ENCODE measurements at regions of chr2 and their contacts with region 1.

Region 1: GRCh38 chr2:222561817-222562645 is 93.9 kb downstream of the FARSB start:
- DNase-seq: peak; percentile 62
- H3K4me3 Mint-ChIP-seq: no peak overlapping the region
- H3K27ac Mint-ChIP-seq: no peak overlapping the region
- H3K4me1 Mint-ChIP-seq: no peaks in the 10 kb centered on the region
- H3K27me3 Mint-ChIP-seq: no peaks in the 10 kb centered on the region

Region 2: DNA sequence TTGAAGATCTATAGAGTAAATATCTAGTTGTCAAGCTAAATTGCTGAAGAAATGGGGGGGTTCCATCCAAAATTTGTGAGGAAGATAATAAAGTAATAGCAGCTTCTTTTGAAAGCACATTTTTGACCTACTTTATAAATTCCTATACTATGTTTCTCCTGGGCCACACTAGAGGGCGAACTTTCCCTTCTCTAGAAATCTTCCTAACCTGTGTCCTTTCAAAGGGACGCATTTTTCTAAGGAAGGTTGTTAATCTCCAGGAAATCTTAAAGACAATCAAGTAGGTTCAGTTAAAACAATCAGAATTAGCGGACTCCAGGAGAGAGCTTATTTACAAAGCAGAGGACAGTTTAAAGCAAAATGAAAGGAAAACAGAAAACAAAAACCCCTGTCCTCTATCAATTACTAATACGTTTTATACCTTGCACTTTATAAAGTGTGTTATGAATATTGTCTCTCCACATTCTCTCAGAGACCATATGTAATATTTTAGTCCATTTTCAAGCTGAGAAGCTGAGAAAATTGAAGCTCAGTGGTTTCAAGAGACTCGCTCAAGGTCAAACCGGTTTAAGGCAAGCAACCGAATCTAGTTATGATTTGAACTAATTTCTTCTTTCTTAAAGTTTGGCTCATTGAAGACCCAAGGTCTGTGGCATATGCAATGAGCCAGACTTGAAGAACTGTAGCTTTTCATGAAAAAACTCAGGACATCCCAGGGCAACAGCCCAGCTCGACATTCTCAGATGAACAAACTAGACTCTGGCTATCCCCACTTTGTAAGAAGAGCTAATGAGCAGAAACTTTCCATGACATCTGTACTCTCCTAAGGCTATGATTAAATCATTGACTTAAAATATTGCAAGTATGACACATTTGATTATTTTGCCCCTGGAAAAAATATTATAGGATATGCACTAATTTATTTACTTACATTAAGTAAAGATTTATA is 536.8 kb before region 1 on chr2:
- CTCF ChIA-PET with region 1: no interaction called
- intact Hi-C with region 1: loop called (anchors 10 kb)
- DNase-seq: peak; percentile 6
- H3K4me3 Mint-ChIP-seq: no peak overlapping the region
- H3K27ac Mint-ChIP-seq: no peak overlapping the region
- H3K4me1 Mint-ChIP-seq: peaks cover 2% of the 10 kb centered on the region
- H3K27me3 Mint-ChIP-seq: peaks cover 9% of the 10 kb centered on the region